Naive thymus-derived CD4-positive, alpha-beta T cell (primary cell): ENCODE measurements at regions of chr17 and their contacts with region 1.

Region 1: DNA sequence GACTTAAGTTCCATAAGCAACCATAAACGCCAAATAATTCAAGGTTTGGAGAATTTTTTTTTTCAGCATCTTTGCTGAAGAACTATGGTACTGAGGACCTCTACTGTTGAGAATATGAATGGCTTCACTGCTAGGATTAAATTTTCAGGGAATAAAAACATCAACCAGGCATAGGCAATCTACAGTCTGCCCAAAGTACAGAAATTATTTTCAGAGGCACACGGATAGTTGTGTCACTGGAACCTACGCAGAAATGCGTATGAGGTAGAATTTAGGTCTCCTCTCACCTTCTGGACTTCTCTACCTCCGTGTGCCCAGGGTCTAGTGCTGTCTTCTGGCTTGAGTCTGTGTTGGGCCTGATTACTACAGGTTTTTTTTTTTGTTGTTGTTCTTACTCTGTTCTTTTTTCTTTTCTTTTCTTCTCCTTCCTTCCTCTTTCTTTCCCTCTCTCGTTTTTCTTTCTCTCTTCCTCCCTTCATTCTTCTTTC is 39.7 kb downstream of the NACA2 start:
- DNase-seq: peak in 1 of 9 donors; percentile 16
- ATAC-seq: no peak
- H3K4me3 ChIP-seq: no peak overlapping the region
- H3K4me3 Mint-ChIP-seq: no peak overlapping the region
- H3K27ac ChIP-seq: no peak overlapping the region
- H3K27ac Mint-ChIP-seq: no peak overlapping the region
- H3K4me1 ChIP-seq: no peaks in the 10 kb centered on the region
- H3K4me1 Mint-ChIP-seq: no peaks in the 10 kb centered on the region
- H3K27me3 ChIP-seq: no peaks in the 10 kb centered on the region
- H3K27me3 Mint-ChIP-seq: peaks cover 37 to 58% (median 53%) of the 10 kb centered on the region in 5 donors

Region 2: GRCh38 chr17:60971515-60972369 is 579.6 kb before region 1 on chr17:
- CTCF ChIA-PET with region 1: no interaction called
- POLR2A ChIA-PET with region 1: no interaction called
- intact Hi-C with region 1: loop called in 1 of 2 experiments (anchors 5 kb)
- DNase-seq: peak in 6 of 9 donors; percentile 8 to 28 (median 16)
- ATAC-seq: peak; percentile 50
- H3K4me3 ChIP-seq: no peak overlapping the region
- H3K4me3 Mint-ChIP-seq: no peak overlapping the region
- H3K27ac ChIP-seq: no peak overlapping the region
- H3K27ac Mint-ChIP-seq: no peak overlapping the region
- H3K4me1 ChIP-seq: no peaks in the 10 kb centered on the region
- H3K4me1 Mint-ChIP-seq: peaks cover 0 to 3% (median 0%) of the 10 kb centered on the region in 7 donors
- H3K27me3 ChIP-seq: no peaks in the 10 kb centered on the region
- H3K27me3 Mint-ChIP-seq: peaks cover 0 to 15% (median 0%) of the 10 kb centered on the region in 5 donors

Region 3: GRCh38 chr17:61065263-61065773 is 486.0 kb before region 1 on chr17:
- CTCF ChIA-PET with region 1: no interaction called
- POLR2A ChIA-PET with region 1: no interaction called
- intact Hi-C with region 1: no loop called
- DNase-seq: no peak
- ATAC-seq: no peak
- H3K4me3 ChIP-seq: no peak overlapping the region
- H3K4me3 Mint-ChIP-seq: no peak overlapping the region
- H3K27ac ChIP-seq: no peak overlapping the region
- H3K27ac Mint-ChIP-seq: no peak overlapping the region
- H3K4me1 ChIP-seq: no peaks in the 10 kb centered on the region
- H3K4me1 Mint-ChIP-seq: peaks cover 0 to 12% (median 4%) of the 10 kb centered on the region in 7 donors
- H3K27me3 ChIP-seq: no peaks in the 10 kb centered on the region
- H3K27me3 Mint-ChIP-seq: no peaks in the 10 kb centered on the region

Region 4: GRCh38 chr17:61412143-61412859 is 139.0 kb before region 1 on chr17:
- CTCF ChIA-PET with region 1: no interaction called
- POLR2A ChIA-PET with region 1: no interaction called
- intact Hi-C with region 1: loop called (anchors 1 kb)
- DNase-seq: peak; percentile 59 to 91 (median 81)
- ATAC-seq: peak; percentile 88
- H3K4me3 ChIP-seq: peak overlapping the region; percentile 64
- H3K4me3 Mint-ChIP-seq: peak overlapping the region in 9 of 10 donors; percentile 56 to 85 (median 76)
- H3K27ac ChIP-seq: peak overlapping the region; percentile 37
- H3K27ac Mint-ChIP-seq: no peak overlapping the region
- H3K4me1 ChIP-seq: peaks cover 7 to 15% of the 10 kb centered on the region in 2 donors
- H3K4me1 Mint-ChIP-seq: peaks cover 12 to 31% (median 23%) of the 10 kb centered on the region in 7 donors
- H3K27me3 ChIP-seq: peaks cover 0 to 23% of the 10 kb centered on the region in 2 donors
- H3K27me3 Mint-ChIP-seq: peaks cover 22 to 59% (median 28%) of the 10 kb centered on the region in 5 donors